ENCODE measurements at regions of chr21 and their contacts with region 1.

Region 1: DNA sequence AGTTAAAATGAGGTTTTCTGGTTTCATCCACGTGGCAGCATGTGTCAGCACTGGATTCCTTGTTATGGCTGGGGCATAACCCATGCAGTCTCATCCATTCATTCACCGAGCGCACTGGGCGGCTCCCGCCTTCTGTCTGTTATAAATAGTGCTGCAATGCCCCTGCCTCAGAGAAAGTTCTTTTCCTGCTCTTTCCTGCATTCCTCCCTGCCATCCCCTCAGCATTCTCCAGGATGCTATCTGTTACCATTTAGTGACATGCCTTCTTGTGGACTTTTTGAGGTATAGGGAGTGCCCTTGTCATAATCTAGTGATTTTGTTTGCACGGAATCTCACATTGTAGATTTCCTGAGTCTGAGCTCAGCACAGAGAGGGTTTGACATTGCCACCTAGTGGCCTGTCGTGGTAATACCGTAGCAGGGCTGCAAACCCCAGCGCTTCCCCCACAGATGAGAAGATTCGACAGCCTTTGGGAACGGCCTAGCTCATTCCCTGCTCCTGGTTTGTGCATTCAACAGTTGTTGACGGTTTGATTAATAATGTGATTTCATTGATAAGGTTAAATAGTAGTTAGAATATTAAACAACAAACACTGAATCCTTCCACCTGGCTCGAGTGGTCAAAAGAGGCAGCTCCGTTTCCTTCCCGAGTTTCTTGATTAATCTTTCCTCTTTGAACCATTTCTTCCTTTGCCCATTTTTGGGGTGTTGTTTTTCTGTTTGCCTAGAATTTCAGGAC is 46.3 kb downstream of the UMODL1 start:
- DNase-seq: peak; percentile 79 to 87 (median 82)
- H3K4me3 ChIP-seq: peak overlapping the region in 1 of 3 donors; percentile 11
- H3K27ac ChIP-seq: no peak overlapping the region
- H3K4me1 ChIP-seq: peaks cover 0 to 2% (median 0%) of the 10 kb centered on the region in 3 donors
- H3K27me3 ChIP-seq: no peaks in the 10 kb centered on the region
- CTCF ChIP-seq: peak; percentile 94

Region 2: DNA sequence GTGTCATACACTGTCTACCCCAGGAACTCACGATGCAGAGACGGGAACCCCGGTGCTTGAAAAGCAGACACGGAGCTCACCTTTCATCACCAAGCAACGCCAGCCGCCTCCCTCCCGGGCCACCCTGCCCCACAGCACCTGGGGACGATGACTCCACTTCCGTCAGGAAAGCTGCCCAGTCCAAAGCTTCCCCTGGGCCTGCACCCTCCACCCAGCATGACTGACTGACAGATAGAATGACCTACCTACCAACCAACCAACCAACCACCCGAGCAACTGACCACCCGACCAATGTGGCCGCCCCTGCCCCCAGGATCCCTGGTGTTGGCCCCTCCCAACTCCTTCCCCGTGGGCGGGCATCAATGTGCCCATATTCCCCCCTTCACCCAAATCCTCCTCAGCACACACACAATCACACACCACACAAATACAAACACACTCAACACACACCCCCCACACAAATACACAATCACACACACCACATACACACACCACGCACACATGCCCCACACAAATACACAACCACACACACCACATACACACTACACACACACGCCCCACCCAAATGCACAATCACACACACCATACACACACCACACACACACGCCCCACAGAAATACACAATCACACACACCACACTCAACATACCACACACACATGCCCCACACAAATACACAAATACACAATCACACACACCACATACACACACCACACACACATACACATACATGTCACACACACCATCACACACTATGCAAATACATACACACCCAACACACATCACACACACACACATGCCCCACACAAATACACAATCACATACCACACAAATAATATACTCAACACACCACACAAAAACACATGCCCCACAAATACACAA is 288.7 kb before region 1 on chr21:
- intact Hi-C with region 1: loop called (anchors 10 kb)
- DNase-seq: no peak
- H3K4me3 ChIP-seq: no peak overlapping the region
- H3K27ac ChIP-seq: no peak overlapping the region
- H3K4me1 ChIP-seq: no peaks in the 10 kb centered on the region
- H3K27me3 ChIP-seq: no peaks in the 10 kb centered on the region
- CTCF ChIP-seq: no peak